ENCODE measurements at regions of chr13 and their contacts with region 1.

Region 1: DNA sequence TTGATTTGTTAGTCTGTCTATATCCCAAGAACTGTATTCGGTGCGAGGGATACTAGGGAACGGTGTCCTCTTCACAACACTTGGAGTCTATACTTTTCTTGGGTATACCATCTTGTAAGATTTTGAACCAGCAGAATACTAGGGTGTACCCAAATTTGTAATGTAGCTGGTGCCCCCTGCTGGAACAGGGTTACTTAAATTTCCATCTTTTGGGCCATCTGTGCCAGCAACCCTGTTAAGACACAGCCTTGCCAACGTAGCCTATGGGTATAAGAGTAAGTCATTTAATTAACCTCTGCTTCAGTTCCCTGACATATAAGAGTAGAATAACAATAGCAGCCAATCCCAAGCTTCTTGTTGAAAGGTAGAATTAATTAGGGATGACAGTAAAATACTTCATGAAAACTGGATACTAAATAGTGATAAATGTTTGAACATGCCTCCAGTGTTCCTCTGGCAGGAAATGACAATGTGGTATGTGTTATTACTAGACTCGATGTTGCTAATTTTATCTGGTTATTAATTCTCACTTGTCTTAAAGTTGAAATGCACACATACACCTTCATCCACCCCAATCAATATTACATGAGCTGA is 607.6 kb downstream of the FGF9 start:
- DNase-seq: peak; percentile 84
- H3K4me3 Mint-ChIP-seq: no peak overlapping the region
- H3K27ac Mint-ChIP-seq: no peak overlapping the region
- H3K4me1 Mint-ChIP-seq: peaks cover 10% of the 10 kb centered on the region
- H3K27me3 Mint-ChIP-seq: no peaks in the 10 kb centered on the region

Region 2: DNA sequence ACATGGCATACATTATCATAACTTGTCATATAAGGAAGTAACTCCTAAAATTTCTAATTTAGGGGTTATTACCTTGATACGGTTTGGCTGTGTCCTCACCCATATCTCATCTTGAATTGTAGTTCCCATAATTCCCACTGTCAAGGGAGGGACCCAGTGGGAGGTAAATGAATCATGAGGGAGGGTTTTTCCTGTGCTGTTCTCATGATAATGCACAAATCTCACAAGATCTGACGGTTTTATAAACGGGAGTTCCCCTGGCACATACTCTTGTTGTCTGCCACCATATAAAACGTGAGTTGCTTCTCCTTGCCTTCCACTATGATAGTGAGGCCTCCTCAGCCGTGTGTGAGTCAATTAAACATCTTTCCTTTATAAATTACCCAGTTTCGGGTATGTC is 895.3 kb before region 1 on chr13:
- CTCF ChIA-PET with region 1: no interaction called
- intact Hi-C with region 1: no loop called
- DNase-seq: no peak
- H3K4me3 Mint-ChIP-seq: no peak overlapping the region
- H3K27ac Mint-ChIP-seq: peak overlapping the region; percentile 32
- H3K4me1 Mint-ChIP-seq: peaks cover 2% of the 10 kb centered on the region
- H3K27me3 Mint-ChIP-seq: no peaks in the 10 kb centered on the region

Region 3: DNA sequence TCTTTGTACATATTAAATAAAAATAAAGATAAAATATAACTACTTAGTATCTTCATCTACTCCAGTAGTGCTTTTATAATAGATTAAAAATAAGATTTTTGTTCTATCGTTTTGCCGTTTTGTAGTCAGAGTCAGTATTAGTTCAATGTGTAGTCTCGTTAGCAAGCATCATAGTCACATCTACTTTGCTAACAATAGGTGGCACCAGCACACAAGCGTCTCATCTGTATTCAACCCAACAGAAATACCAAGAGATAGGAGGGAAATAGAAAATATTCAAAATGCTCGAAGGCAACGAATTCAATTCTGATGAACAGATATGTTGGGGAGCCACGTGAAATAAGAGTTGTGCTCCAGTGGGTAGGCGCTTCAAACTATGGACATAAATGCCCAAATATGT is 653.1 kb before region 1 on chr13:
- CTCF ChIA-PET with region 1: no interaction called
- intact Hi-C with region 1: loop called (anchors 1 kb)
- DNase-seq: peak; percentile 27
- H3K4me3 Mint-ChIP-seq: no peak overlapping the region
- H3K27ac Mint-ChIP-seq: no peak overlapping the region
- H3K4me1 Mint-ChIP-seq: no peaks in the 10 kb centered on the region
- H3K27me3 Mint-ChIP-seq: peaks cover 3% of the 10 kb centered on the region

Region 4: GRCh38 chr13:21676611-21677021 is 601.8 kb before region 1 on chr13:
- CTCF ChIA-PET with region 1: no interaction called
- intact Hi-C with region 1: loop called (anchors 1 kb)
- DNase-seq: peak; percentile 66
- H3K4me3 Mint-ChIP-seq: no peak overlapping the region
- H3K27ac Mint-ChIP-seq: no peak overlapping the region
- H3K4me1 Mint-ChIP-seq: peaks cover 20% of the 10 kb centered on the region
- H3K27me3 Mint-ChIP-seq: peaks cover 24% of the 10 kb centered on the region

Region 5: DNA sequence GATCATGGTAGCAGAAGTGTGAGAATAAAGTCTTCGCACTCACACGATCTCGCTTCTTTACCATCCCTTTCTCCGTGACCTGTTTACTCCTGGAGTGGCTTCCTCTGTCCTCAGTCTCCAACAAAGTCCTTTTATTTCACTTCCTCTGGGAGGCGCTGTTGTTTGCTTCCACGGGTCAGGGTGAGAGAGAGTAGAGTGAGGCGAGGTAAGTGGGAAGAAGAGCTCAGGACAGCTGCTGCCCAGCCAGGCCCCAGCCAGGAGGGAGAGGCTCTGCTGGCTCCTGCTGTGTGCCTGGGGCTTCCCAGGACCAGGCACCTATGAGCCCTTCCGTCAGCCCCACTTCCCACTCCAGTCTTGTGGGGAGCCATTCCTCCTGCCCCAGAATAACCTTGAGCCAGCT is 365.4 kb before region 1 on chr13:
- CTCF ChIA-PET with region 1: no interaction called
- intact Hi-C with region 1: loop called (anchors 1 kb)
- DNase-seq: no peak
- H3K4me3 Mint-ChIP-seq: no peak overlapping the region
- H3K27ac Mint-ChIP-seq: no peak overlapping the region
- H3K4me1 Mint-ChIP-seq: no peaks in the 10 kb centered on the region
- H3K27me3 Mint-ChIP-seq: no peaks in the 10 kb centered on the region

Measured in activated naive CD4-positive, alpha-beta T cell treated with anti-CD3 and anti-CD28 coated beads for 36 hours (primary cell).